ENCODE measurements at regions of chr7 and their contacts with region 1.

Region 1: GRCh38 chr7:44638611-44639557 is 32.5 kb downstream of the OGDH start:
- DNase-seq: peak; percentile 43
- ATAC-seq: peak; percentile 90
- H3K4me3 ChIP-seq: no peak overlapping the region
- H3K27ac ChIP-seq: peak overlapping the region; percentile 92
- H3K4me1 ChIP-seq: peaks cover 46% of the 10 kb centered on the region
- H3K27me3 ChIP-seq: no peaks in the 10 kb centered on the region
- CTCF ChIP-seq: no peak

Region 2: DNA sequence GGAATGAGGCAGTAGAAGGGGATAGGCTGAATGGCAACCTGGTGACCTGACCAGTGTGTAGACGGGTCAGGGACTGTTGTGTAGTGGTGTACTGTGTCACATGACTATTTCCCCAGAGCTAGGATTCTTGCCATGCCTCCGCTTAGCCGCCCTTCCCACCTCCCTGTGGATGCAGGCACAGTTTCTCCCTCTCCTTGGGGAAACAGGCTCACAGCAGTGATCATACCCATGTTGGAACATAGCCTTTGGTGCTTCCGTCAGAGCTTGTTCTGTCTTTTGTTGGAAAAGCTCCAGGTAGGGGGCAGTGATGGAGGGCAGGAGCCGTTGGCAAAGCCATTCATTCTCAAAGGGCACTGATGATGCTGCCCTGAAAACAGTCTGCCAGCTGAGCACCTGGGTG is 11.9 kb after region 1 on chr7:
- CTCF ChIA-PET with region 1: no interaction called
- POLR2A ChIA-PET with region 1: no interaction called
- in situ Hi-C with region 1: no loop called
- intact Hi-C with region 1: no loop called
- DNase-seq: no peak
- ATAC-seq: no peak
- H3K4me3 ChIP-seq: no peak overlapping the region
- H3K27ac ChIP-seq: no peak overlapping the region
- H3K4me1 ChIP-seq: no peaks in the 10 kb centered on the region
- H3K27me3 ChIP-seq: no peaks in the 10 kb centered on the region
- CTCF ChIP-seq: no peak

Region 3: DNA sequence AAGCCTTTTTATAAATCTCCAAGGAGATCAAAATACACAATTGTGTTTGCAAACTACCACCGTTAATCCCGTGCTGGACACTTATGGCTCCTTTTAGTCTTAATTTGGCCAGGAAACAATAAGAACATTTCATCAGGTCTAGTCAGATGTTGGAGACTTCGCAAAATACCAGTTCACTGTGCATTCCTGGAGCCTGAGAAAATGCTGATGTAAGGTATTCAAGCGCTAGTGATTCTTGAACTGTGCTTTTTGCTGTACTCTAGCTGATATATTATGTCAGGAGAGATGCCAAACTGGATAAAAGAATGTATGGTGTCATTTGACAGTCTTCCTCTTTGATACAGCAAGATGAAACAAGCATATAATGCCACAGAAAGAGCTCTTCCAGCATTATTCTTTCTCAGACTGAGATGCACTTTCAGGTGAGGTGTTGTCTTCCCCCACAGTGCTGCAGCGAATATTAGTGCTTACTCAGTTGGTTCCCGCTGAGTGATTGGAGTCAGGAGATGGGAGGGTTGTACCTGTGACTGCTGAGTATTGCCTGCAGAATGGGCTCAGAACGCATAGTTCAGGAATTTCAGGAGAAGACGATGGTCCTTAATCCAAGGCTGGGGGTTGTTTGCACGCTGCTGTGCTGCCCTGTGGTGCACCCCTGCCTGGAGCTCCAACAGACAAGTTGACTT is 26.8 kb after region 1 on chr7:
- CTCF ChIA-PET with region 1: interaction called, 14 read pairs
- POLR2A ChIA-PET with region 1: no interaction called
- in situ Hi-C with region 1: no loop called
- intact Hi-C with region 1: no loop called
- DNase-seq: no peak
- ATAC-seq: no peak
- H3K4me3 ChIP-seq: no peak overlapping the region
- H3K27ac ChIP-seq: no peak overlapping the region
- H3K4me1 ChIP-seq: no peaks in the 10 kb centered on the region
- H3K27me3 ChIP-seq: no peaks in the 10 kb centered on the region
- CTCF ChIP-seq: no peak

Region 4: GRCh38 chr7:45863715-45864114 is 1224.8 kb after region 1 on chr7:
- CTCF ChIA-PET with region 1: no interaction called
- POLR2A ChIA-PET with region 1: no interaction called
- in situ Hi-C with region 1: no loop called
- intact Hi-C with region 1: no loop called
- DNase-seq: no peak
- ATAC-seq: 0 out of 2 replicates have a peak, but pooled peaks have one; percentile 33
- H3K4me3 ChIP-seq: no peak overlapping the region
- H3K27ac ChIP-seq: no peak overlapping the region
- H3K4me1 ChIP-seq: no peaks in the 10 kb centered on the region
- H3K27me3 ChIP-seq: peaks cover 10% of the 10 kb centered on the region
- CTCF ChIP-seq: peak; percentile 45